HCT116 (cell line): ENCODE measurements at regions of chr15 and their contacts with region 1.

Region 1: DNA sequence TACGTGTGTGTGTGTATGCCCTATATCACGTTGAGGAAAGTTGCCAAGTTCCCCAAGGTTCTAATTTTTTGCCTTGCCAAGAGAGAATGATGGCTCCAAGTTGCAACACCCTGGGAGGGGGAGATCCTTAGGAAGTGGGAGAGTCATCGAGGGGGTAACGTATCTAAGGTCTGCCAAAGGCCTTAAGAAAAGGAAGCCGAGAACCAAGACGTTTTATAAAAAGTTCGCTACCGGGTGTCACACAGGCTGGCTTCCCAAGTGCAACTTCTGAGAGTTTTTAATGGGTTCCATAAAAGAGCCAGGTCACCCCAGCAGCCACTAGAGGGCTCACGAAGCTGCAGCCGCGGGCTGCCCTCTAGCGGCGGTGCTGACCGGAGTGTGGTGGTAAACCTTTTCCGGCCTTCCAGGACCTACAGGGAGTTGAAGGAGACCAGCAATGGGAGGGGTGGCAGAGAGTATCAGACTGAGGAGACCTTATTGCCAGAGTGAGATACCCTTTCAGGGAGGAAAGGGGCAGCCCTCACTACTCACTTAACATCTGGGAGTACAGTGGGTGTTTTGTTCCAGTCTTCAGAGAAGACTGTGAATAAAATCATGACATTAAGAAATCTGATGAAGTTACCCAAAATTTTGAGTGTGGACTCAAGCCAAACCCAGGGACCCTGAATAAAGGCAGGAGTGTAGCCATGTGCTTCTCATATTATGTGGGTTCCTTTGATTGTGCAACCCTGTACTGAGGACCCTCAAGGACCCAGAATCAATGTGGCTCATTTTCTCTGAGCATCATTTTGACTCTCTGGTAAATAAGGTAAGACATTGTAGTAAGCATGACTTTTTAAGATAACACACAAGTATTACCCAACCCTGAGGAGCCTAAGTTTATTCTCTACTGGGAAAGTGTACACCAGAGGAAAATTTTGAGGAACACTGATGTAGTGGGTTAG is 2.5 kb upstream of the RFX7 start:
- DNase-seq: peak; percentile 82
- ATAC-seq: peak; percentile 76
- H3K4me3 ChIP-seq: peak overlapping the region; percentile 35 to 53
- H3K27ac ChIP-seq: peak overlapping the region; percentile 1; the same call in 1 of the 2 replicates
- H3K4me1 ChIP-seq: peaks cover 9 to 28% of the 10 kb centered on the region in 2 experiments
- H3K27me3 ChIP-seq: no peaks in the 10 kb centered on the region
- CTCF ChIP-seq: peak; percentile 100
- POLR2A ChIP-seq: peak; percentile 26
- RAD21 ChIP-seq: peak; percentile 81

Region 2: GRCh38 chr15:55993111-55993803 is 252.9 kb before region 1 on chr15 and contains the start of gene NEDD4:
- CTCF ChIA-PET with region 1: no interaction called
- POLR2A ChIA-PET with region 1: no interaction called
- RAD21 ChIA-PET with region 1: no interaction called
- intact Hi-C with region 1: loop called (anchors 10 kb)
- DNase-seq: peak; percentile 47
- ATAC-seq: peak; percentile 95
- H3K4me3 ChIP-seq: peak within 1 kb of the TSS; percentile 66 to 77
- H3K27ac ChIP-seq: peak within 1 kb of the TSS; percentile 68
- H3K4me1 ChIP-seq: peaks cover 8 to 17% of the 10 kb centered on the region in 2 experiments
- H3K27me3 ChIP-seq: no peaks in the 10 kb centered on the region
- CTCF ChIP-seq: peak; percentile 8 to 52 (median 40); a peak in 4 of 6 replicates
- POLR2A ChIP-seq: peak; percentile 60
- RAD21 ChIP-seq: no peak
- total RNA-seq, gene NEDD4: 13.7 TPM

Region 3: DNA sequence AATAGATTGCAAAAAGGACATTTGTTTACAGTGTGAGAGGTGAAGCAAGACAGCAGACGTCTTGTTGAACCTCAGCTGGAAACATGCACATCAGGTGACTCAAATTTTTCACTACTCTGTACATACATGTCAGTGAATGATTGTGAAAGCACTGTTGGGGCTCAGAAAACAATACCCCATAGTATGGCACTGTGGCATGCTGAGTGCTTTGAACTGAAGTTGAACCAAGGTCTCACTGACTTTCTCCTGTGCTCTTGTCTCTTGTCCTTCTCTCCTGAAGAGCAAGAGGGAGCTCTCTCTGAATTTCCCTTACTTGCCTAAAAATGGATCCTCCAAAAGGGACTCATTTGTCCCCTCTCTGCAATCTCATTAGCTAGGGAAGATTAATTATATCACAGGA is 228.2 kb before region 1 on chr15:
- CTCF ChIA-PET with region 1: no interaction called
- POLR2A ChIA-PET with region 1: no interaction called
- RAD21 ChIA-PET with region 1: no interaction called
- intact Hi-C with region 1: no loop called
- DNase-seq: no peak
- ATAC-seq: no peak
- H3K4me3 ChIP-seq: no peak overlapping the region
- H3K27ac ChIP-seq: no peak overlapping the region
- H3K4me1 ChIP-seq: peaks cover 2 to 9% of the 10 kb centered on the region in 2 experiments; a peak in 2 of 4 replicates
- H3K27me3 ChIP-seq: no peaks in the 10 kb centered on the region
- CTCF ChIP-seq: peak in 1 of 3 experiments; percentile 17; a peak in 1 of 6 replicates
- POLR2A ChIP-seq: no peak
- RAD21 ChIP-seq: no peak

Region 4: DNA sequence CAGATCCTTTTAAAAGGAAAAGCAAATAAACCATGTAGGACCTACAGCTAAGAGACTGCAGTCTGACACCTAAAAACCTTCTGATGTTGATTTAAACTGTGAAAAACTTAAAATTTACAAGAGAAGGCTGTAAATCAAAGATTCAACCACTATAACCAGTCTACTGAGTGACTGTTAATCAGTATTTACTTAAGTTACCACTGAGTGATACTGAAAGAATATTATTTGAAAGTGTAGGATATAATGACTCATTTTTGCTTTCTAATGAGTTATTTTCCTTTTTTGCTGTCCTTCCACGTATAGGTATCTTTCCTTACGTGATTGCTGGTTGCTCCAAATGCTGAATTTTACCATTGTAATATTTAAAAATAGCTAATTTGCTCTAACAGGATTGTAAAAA is 47.1 kb before region 1 on chr15:
- CTCF ChIA-PET with region 1: no interaction called
- POLR2A ChIA-PET with region 1: no interaction called
- RAD21 ChIA-PET with region 1: no interaction called
- intact Hi-C with region 1: no loop called
- DNase-seq: no peak
- ATAC-seq: no peak
- H3K4me3 ChIP-seq: no peak overlapping the region
- H3K27ac ChIP-seq: no peak overlapping the region
- H3K4me1 ChIP-seq: no peaks in the 10 kb centered on the region
- H3K27me3 ChIP-seq: no peaks in the 10 kb centered on the region
- CTCF ChIP-seq: no peak
- POLR2A ChIP-seq: no peak
- RAD21 ChIP-seq: no peak

Region 5: GRCh38 chr15:56261854-56262509 is 15.8 kb after region 1 on chr15:
- CTCF ChIA-PET with region 1: interaction called, 10 read pairs
- POLR2A ChIA-PET with region 1: interaction called, 3 read pairs
- RAD21 ChIA-PET with region 1: no interaction called
- intact Hi-C with region 1: no loop called
- DNase-seq: no peak
- ATAC-seq: no peak
- H3K4me3 ChIP-seq: no peak overlapping the region
- H3K27ac ChIP-seq: no peak overlapping the region
- H3K4me1 ChIP-seq: peaks cover 0 to 8% of the 10 kb centered on the region in 2 experiments; a peak in 1 of 4 replicates
- H3K27me3 ChIP-seq: no peaks in the 10 kb centered on the region
- CTCF ChIP-seq: no peak
- POLR2A ChIP-seq: no peak
- RAD21 ChIP-seq: no peak

Region 6: GRCh38 chr15:56428821-56429458 is 182.8 kb after region 1 on chr15:
- CTCF ChIA-PET with region 1: interaction called, 54 read pairs
- POLR2A ChIA-PET with region 1: no interaction called
- RAD21 ChIA-PET with region 1: interaction called in 1 of 2 experiments, 8 read pairs
- intact Hi-C with region 1: loop called (anchors 1 kb)
- DNase-seq: peak; percentile 10
- ATAC-seq: peak; percentile 44; the same call in 1 of the 2 replicates
- H3K4me3 ChIP-seq: no peak overlapping the region
- H3K27ac ChIP-seq: no peak overlapping the region
- H3K4me1 ChIP-seq: no peaks in the 10 kb centered on the region
- H3K27me3 ChIP-seq: no peaks in the 10 kb centered on the region
- CTCF ChIP-seq: peak; percentile 33 to 72 (median 66); a peak in 5 of 6 replicates
- POLR2A ChIP-seq: no peak
- RAD21 ChIP-seq: peak; percentile 73